MCF 10A (cell line): ENCODE measurements at regions of chr17 and their contacts with region 1.

Region 1: GRCh38 chr17:38557836-38558727 is 47.7 kb downstream of the SRCIN1 start:
- DNase-seq: peak; percentile 97
- H3K4me3 Mint-ChIP-seq: peak overlapping the region; percentile 97
- H3K27ac Mint-ChIP-seq: peak overlapping the region; percentile 54
- H3K4me1 Mint-ChIP-seq: peaks cover 26% of the 10 kb centered on the region
- H3K27me3 Mint-ChIP-seq: no peaks in the 10 kb centered on the region
- CTCF ChIP-seq: peak; percentile 75

Region 2: GRCh38 chr17:38547444-38547843 is 10.6 kb before region 1 on chr17:
- CTCF ChIA-PET with region 1: interaction called, 16 read pairs
- POLR2A ChIA-PET with region 1: interaction called, 3 read pairs
- intact Hi-C with region 1: no loop called
- DNase-seq: no peak
- H3K4me3 Mint-ChIP-seq: no peak overlapping the region
- H3K27ac Mint-ChIP-seq: no peak overlapping the region
- H3K4me1 Mint-ChIP-seq: peaks cover 10% of the 10 kb centered on the region
- H3K27me3 Mint-ChIP-seq: no peaks in the 10 kb centered on the region
- CTCF ChIP-seq: no peak

Region 3: GRCh38 chr17:38584350-38584925 is 26.4 kb after region 1 on chr17:
- CTCF ChIA-PET with region 1: interaction called, 86 read pairs
- POLR2A ChIA-PET with region 1: interaction called, 62 read pairs
- intact Hi-C with region 1: loop called (anchors 1 kb)
- DNase-seq: peak; percentile 76
- H3K4me3 Mint-ChIP-seq: peak overlapping the region; percentile 26
- H3K27ac Mint-ChIP-seq: no peak overlapping the region
- H3K4me1 Mint-ChIP-seq: peaks cover 13% of the 10 kb centered on the region
- H3K27me3 Mint-ChIP-seq: no peaks in the 10 kb centered on the region
- CTCF ChIP-seq: peak; percentile 96

Region 4: DNA sequence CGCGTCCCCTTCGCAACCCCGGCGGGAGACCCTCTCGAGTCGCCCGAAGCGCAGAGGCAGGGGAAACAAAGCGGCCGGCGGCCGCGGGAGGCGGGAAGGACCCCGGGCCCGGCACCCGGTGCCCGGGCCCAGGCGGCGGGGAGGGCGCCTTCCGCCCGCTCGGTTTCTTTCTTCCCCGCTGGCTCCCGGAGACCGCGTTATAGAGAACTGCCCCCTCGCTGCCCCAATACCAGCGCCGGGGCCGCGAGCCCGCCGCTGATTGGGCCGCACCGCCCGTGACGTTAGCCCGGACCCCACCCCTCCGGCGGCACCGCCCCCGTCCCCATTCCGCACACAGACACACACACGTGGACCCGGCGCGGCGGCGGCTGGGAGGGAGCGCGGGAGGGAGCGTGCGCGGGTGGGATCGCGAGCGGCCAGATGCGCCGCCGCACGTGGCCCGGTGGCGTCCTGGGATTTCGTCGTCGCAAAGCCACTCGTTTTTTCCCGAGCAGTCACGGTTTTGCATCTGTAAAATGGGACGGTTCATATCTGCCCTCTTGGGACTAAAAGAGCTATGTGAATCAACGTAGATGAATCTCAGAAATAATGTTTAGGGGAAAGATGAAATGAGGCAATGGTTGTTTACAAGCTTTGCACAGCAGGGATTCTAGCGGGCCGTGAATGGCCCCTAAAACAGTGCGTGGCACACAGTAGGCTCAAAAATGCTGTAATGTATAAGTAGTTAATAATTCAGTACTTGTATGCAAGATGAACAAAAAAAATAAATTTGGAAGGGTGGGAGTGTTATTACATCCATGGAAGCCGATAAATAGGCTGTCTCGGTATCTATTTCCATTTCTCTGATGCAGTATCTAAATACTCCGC is 116.9 kb after region 1 on chr17 and contains the start of gene EPOP:
- CTCF ChIA-PET with region 1: interaction called, 12 read pairs
- POLR2A ChIA-PET with region 1: interaction called, 12 read pairs
- intact Hi-C with region 1: no loop called
- DNase-seq: peak; percentile 82
- H3K4me3 Mint-ChIP-seq: peak within 1 kb of the TSS; percentile 64
- H3K27ac Mint-ChIP-seq: no peak within 1 kb of the TSS
- H3K4me1 Mint-ChIP-seq: peaks cover 13% of the 10 kb centered on the region
- H3K27me3 Mint-ChIP-seq: peaks cover 2% of the 10 kb centered on the region
- CTCF ChIP-seq: no peak
- total RNA-seq, gene EPOP: 3.4 and 3.6 TPM in 2 replicates

Region 5: GRCh38 chr17:38702166-38702899 is 144.3 kb after region 1 on chr17:
- CTCF ChIA-PET with region 1: no interaction called
- POLR2A ChIA-PET with region 1: interaction called, 10 read pairs
- intact Hi-C with region 1: no loop called
- DNase-seq: peak; percentile 88
- H3K4me3 Mint-ChIP-seq: peak overlapping the region; percentile 99
- H3K27ac Mint-ChIP-seq: peak overlapping the region; percentile 75
- H3K4me1 Mint-ChIP-seq: peaks cover 17% of the 10 kb centered on the region
- H3K27me3 Mint-ChIP-seq: peaks cover 10% of the 10 kb centered on the region
- CTCF ChIP-seq: no peak

Region 6: DNA sequence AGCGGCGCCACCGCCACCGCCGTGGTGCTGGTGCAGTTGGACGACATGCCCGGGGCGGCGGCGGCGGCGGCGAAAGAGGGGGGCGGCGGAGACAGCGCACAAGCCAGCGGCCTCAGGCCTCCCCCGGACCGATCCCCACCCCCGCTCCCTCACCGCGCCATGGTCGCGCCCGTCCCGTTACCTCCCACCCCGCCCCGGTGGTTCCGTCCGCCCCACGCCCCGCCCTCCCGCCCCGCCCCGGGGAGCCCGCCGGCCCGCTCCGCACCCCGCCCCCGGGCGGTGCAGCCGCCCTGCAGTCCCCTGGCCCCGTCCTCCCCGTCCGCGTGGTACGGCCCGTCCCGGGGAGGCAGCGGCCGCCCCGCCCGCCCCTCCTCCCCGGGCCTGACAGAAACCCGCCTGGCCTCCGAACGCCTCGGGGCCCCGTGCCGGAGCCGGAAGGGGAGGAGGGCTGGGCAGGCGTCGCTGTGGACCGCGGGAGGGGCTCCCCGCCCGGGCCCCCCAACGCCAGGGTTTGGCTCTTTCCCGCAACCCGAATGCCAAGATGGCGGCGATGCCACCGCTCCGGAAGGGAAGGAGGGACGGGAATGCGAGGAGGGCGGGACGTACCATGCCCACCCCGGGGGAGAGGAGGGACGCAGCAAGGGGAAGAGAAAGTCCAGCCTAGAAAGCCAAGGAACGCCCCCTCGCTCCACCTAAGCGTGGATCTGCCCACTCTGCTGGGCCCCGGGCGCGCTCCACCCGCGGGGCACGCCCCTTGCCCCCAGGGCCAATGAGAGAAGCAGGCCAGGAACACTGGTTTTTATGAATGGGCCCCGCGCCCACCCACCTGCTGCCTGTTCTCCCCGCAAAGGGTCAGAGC is 241.5 kb after region 1 on chr17 and contains the start of gene PIP4K2B:
- CTCF ChIA-PET with region 1: no interaction called
- POLR2A ChIA-PET with region 1: no interaction called
- intact Hi-C with region 1: no loop called
- DNase-seq: peak; percentile 96
- H3K4me3 Mint-ChIP-seq: peak within 1 kb of the TSS; percentile 98
- H3K27ac Mint-ChIP-seq: peak within 1 kb of the TSS; percentile 66
- H3K4me1 Mint-ChIP-seq: peaks cover 36% of the 10 kb centered on the region
- H3K27me3 Mint-ChIP-seq: no peaks in the 10 kb centered on the region
- CTCF ChIP-seq: no peak
- total RNA-seq, gene PIP4K2B: 25.9 and 27.4 TPM in 2 replicates